PC-3 (cell line): ENCODE measurements at regions of chr18 and their contacts with region 1.

Region 1: DNA sequence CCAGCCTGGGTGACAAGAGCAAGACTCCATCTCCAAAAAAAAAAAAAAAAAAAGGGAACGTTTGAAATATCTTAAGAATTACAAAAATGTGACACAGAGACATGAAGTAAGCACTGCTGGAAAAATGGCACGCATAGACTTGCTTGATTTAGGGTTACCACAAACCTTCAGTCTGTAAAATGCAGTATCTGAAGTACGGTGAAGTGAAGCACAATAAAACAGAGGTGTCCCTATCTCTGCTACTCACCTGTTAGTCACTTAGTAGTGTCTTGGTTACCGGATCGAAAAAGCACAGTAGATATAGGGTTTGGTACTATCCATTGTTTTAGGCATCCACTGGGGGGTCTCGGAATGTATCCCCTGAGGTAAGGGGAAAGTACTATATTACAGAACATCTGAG is 11.6 kb upstream of the GREB1L start:
- DNase-seq: no peak
- ATAC-seq: no peak
- H3K4me3 ChIP-seq: no peak overlapping the region
- H3K27ac ChIP-seq: no peak overlapping the region
- H3K4me1 ChIP-seq: no peaks in the 10 kb centered on the region
- H3K27me3 ChIP-seq: no peaks in the 10 kb centered on the region
- CTCF ChIP-seq: no peak

Region 2: DNA sequence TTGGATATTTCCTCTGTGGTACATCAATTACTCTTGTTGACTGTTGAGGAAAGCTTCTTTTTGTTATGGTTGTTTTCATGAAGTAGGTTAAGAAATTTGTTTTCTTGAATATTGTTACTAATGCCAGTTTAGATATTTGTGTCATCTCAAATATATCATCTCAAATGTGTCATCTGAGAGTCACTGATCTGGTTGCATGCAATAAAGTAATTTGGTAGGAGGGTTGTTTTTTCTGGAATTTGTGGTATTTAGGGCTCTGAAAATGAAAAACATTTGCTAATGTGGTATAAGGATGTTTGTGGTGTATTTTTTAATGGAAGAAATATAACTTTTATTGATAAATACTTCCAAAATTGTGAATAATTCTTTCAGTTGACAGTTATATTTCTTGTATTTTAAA is 129.3 kb after region 1 on chr18:
- CTCF ChIA-PET with region 1: no interaction called
- POLR2A ChIA-PET with region 1: no interaction called
- intact Hi-C with region 1: no loop called
- DNase-seq: peak; percentile 18
- ATAC-seq: no peak
- H3K4me3 ChIP-seq: no peak overlapping the region
- H3K27ac ChIP-seq: no peak overlapping the region
- H3K4me1 ChIP-seq: 0 out of 2 replicates have a peak, but pooled peaks cover 4% of the 10 kb centered on the region
- H3K27me3 ChIP-seq: no peaks in the 10 kb centered on the region
- CTCF ChIP-seq: no peak

Region 3: GRCh38 chr18:21777814-21778213 is 547.4 kb after region 1 on chr18:
- CTCF ChIA-PET with region 1: no interaction called
- POLR2A ChIA-PET with region 1: interaction called, 27 read pairs
- intact Hi-C with region 1: no loop called
- DNase-seq: no peak
- ATAC-seq: peak; percentile 58
- H3K4me3 ChIP-seq: no peak overlapping the region
- H3K27ac ChIP-seq: no peak overlapping the region
- H3K4me1 ChIP-seq: peaks cover 6% of the 10 kb centered on the region; the same call in 1 of the 2 replicates
- H3K27me3 ChIP-seq: no peaks in the 10 kb centered on the region
- CTCF ChIP-seq: no peak